OCI-LY7 (cell line): ENCODE measurements at regions of chr2 and their contacts with region 1.

Region 1: DNA sequence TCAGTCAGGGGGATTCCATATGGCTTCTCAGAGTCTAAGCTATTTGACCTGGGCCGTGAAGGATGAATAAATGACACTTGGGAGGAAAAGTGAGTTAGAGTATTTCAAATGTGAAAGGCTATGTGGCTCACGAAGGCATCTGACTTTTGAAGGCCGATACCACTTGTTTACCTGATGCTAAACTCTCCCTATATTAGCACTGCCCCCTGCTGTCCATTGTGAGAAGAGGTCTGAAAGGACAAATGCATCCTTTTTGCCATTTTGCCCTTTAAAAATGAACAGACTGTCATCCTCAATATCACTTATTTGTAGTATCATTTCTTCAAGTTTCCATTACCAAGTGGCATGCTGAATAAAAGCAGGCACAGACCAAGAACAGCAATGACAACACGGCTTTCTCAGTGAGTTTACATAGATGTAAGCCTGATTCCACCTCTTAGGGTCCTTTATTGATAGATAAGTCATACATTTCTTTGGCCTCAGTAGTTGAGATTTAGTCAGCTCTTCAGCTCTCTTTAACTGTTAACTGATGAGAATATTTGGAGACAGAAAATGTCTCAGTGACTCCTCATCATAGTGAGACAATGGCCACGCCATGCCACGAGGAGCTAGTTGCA is 40.1 kb downstream of the DOCK10 start:
- DNase-seq: peak; percentile 86
- H3K4me3 ChIP-seq: no peak overlapping the region
- H3K27ac ChIP-seq: peak overlapping the region; percentile 64
- H3K4me1 ChIP-seq: peaks cover 24% of the 10 kb centered on the region
- CTCF ChIP-seq: peak; percentile 93

Region 2: GRCh38 chr2:224357098-224357901 is 644.8 kb before region 1 on chr2:
- CTCF ChIA-PET with region 1: no interaction called
- POLR2A ChIA-PET with region 1: no interaction called
- intact Hi-C with region 1: loop called (anchors 2 kb)
- DNase-seq: peak; percentile 75
- H3K4me3 ChIP-seq: no peak overlapping the region
- H3K27ac ChIP-seq: no peak overlapping the region
- H3K4me1 ChIP-seq: peaks cover 8% of the 10 kb centered on the region
- CTCF ChIP-seq: peak; percentile 93

Region 3: DNA sequence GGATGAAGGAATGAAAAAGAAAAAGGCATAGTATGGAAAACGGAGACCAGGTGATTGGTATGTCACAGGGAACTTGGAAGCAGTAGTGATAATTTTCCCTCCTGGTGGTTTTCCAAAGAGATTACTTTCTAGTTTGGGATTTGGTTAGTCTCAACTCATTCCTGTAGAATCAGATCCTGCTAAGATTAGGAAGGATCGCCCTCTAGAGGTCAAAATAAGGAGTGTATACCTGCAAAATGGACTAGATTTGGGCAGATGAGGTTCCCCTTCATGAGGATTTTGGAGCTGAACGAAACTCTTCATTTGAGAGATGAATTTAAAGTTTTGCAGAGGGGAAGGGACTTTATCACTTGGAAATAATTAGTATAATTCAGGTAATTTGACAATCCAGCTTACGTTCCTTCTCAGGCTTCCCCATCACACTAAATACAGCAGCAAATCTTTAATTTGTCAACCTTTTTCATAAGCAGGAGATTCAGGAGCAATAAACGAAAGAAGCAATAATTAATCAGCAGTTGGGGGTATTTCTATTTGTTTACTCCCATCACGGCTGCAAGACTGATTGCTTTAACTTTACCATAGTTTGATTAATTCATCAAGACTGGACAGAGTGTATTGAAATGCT is 351.2 kb before region 1 on chr2:
- CTCF ChIA-PET with region 1: no interaction called
- POLR2A ChIA-PET with region 1: no interaction called
- intact Hi-C with region 1: loop called (anchors 10 kb)
- DNase-seq: peak; percentile 85
- H3K4me3 ChIP-seq: peak overlapping the region; percentile 38
- H3K27ac ChIP-seq: peak overlapping the region; percentile 34
- H3K4me1 ChIP-seq: peaks cover 35% of the 10 kb centered on the region
- CTCF ChIP-seq: peak; percentile 98

Region 4: DNA sequence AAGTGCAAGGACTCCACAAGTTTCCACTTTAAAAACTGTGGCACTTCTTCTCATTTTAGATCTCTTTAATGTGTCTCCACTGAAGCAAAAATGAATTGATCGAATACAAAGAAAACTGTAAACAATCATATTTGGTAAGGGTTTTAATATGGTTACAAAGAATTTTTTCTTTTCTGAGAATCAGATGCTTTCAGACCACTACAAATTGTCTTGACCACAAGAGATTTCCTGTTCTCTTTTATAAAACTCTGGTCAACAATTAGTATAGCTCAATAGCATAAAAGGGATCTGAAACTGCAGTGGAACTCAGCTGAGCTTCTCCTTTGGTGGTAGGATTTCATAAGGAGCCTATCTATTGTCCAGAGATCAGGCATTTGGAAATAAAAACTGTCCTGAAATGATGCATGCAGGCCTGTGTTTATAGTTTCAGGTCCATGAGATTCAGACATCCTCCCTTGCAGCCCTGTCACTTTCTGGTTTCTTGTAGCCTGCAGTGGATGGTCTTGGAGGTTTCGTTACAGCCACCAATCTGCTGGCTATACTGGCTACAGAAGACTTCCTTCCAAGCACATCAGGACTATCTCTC is 79.9 kb before region 1 on chr2:
- CTCF ChIA-PET with region 1: no interaction called
- POLR2A ChIA-PET with region 1: no interaction called
- intact Hi-C with region 1: loop called (anchors 2 kb)
- DNase-seq: peak; percentile 85
- H3K4me3 ChIP-seq: peak overlapping the region; percentile 32
- H3K27ac ChIP-seq: peak overlapping the region; percentile 71
- H3K4me1 ChIP-seq: peaks cover 68% of the 10 kb centered on the region
- CTCF ChIP-seq: no peak

Region 5: DNA sequence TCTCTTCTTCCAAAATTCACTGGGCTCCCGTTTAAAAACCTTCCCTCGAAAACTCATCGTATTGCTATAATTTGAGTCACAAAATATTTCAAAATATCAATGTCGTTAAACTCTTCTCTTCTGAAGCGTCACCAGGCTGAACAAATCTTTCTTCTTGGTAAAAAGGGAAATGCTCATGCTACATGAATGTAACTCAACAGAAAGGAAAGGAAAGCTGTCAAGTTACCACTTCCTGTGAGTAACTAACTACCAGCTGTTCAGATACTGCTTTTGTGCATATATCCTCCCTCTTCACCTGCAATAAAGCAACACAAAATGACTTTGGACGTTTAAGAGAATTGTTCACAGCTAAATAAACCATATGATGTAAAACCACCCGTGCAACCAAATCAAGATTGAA is 55.3 kb before region 1 on chr2:
- CTCF ChIA-PET with region 1: no interaction called
- POLR2A ChIA-PET with region 1: interaction called, 7 read pairs
- intact Hi-C with region 1: loop called (anchors 1 kb)
- DNase-seq: peak; percentile 86
- H3K4me3 ChIP-seq: peak overlapping the region; percentile 83
- H3K27ac ChIP-seq: peak overlapping the region; percentile 92
- H3K4me1 ChIP-seq: peaks cover 80% of the 10 kb centered on the region
- CTCF ChIP-seq: no peak

Region 6: DNA sequence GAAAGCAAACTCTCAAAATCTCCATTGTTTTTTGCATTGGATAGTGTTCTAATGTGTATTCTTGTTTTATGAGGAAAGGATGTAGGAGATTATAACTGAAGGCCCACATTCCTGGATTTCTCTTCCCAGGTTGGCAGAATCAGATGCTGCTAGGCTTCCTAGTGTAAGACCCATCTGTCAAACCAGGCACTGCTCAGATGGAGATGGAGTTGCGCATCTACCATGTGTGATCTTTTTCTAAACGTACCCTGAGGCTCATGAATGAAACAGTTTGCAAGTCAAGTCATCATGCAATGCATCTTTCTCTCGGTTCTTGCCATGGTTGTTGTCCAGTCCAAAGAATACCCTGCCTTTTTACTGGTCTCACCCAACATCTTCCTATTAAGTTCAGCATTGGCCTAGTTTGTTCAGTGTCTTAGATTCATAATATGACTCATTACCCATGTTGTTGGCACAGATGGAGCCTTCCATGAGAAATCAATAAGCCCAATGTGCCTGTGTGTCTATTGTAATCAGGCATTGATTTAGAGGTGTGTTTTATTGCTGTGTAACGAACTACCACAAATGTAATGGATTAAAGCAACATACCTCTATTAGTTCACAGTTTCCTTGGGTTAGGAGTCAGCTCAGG is 524.7 kb after region 1 on chr2:
- CTCF ChIA-PET with region 1: no interaction called
- POLR2A ChIA-PET with region 1: no interaction called
- intact Hi-C with region 1: no loop called
- DNase-seq: no peak
- H3K4me3 ChIP-seq: no peak overlapping the region
- H3K27ac ChIP-seq: no peak overlapping the region
- H3K4me1 ChIP-seq: no peaks in the 10 kb centered on the region
- CTCF ChIP-seq: no peak

Region 7: GRCh38 chr2:225660262-225661131 is 658.4 kb after region 1 on chr2:
- CTCF ChIA-PET with region 1: no interaction called
- POLR2A ChIA-PET with region 1: no interaction called
- intact Hi-C with region 1: loop called (anchors 1 kb)
- DNase-seq: peak; percentile 75
- H3K4me3 ChIP-seq: no peak overlapping the region
- H3K27ac ChIP-seq: no peak overlapping the region
- H3K4me1 ChIP-seq: no peaks in the 10 kb centered on the region
- CTCF ChIP-seq: peak; percentile 98